ENCODE measurements at regions of chr14 and their contacts with region 1.

Region 1: DNA sequence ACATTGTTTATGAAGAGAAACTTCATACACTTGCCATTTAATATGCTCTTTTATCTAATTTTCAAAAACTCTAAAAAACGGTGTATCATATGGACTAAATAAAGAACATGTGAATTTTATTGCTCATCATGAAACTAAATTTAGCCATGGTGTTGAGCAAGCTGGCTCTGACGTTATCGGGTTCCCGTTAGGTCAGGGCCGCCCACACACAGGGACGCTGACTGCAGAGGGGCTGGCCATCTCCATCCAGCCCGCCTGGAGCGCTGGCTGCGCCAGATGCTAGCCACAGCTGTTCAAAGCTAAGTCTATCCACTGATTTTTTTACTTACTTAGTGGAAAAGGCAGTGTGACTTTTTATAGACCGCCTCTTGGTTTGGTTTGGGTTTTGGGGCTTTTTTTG is 36.5 kb upstream of the DYNC1H1 start:
- DNase-seq: peak; percentile 86 to 93
- ATAC-seq: peak; percentile 93 to 99 (median 98)
- H3K4me3 ChIP-seq: no peak overlapping the region
- H3K27ac ChIP-seq: peak overlapping the region in 9 of 10 donors; percentile 58 to 85 (median 76)
- H3K4me1 ChIP-seq: peaks cover 6 to 30% (median 26%) of the 10 kb centered on the region in 9 donors
- H3K27me3 ChIP-seq: no peaks in the 10 kb centered on the region
- CTCF ChIP-seq: no peak

Region 2: GRCh38 chr14:101843665-101844064 is 84.2 kb before region 1 on chr14:
- intact Hi-C with region 1: loop called in 1 of 10 experiments (anchors 5 kb)
- DNase-seq: no peak
- ATAC-seq: peak in 4 of 8 donors; percentile 21 to 40 (median 27)
- H3K4me3 ChIP-seq: no peak overlapping the region
- H3K27ac ChIP-seq: peak overlapping the region in 7 of 10 donors; percentile 26 to 68 (median 45)
- H3K4me1 ChIP-seq: peaks cover 4 to 71% (median 43%) of the 10 kb centered on the region in 9 donors
- H3K27me3 ChIP-seq: no peaks in the 10 kb centered on the region
- CTCF ChIP-seq: peak in 6 of 9 donors; percentile 21 to 52 (median 40)

Measured in heart right ventricle (tissue), 16 donors.